ENCODE measurements at regions of chr10 and their contacts with region 1.

Region 1: DNA sequence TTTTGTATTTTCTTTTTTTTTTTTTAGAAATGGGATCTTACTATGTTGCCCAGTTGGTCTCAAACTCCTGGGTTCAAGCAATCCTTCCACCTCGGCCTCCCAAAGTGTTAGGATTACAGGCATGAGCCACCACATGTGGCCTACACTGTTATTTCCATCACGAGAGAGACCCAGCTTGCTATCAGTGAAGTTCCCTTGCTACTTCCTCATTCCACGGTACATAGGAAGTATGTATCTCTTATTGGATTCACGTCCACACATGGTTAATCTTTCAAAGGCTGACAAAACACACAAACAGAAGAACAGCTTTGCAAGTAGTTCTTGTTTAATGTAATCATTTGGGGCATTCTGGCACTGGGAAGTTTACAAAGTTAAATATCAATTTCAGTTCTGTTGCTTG is 50.9 kb downstream of the DCLRE1A start:
- DNase-seq: no peak
- ATAC-seq: no peak
- H3K4me3 Mint-ChIP-seq: no peak overlapping the region
- H3K27ac Mint-ChIP-seq: no peak overlapping the region
- H3K4me1 Mint-ChIP-seq: no peaks in the 10 kb centered on the region
- H3K27me3 Mint-ChIP-seq: peaks cover 33% of the 10 kb centered on the region

Region 2: DNA sequence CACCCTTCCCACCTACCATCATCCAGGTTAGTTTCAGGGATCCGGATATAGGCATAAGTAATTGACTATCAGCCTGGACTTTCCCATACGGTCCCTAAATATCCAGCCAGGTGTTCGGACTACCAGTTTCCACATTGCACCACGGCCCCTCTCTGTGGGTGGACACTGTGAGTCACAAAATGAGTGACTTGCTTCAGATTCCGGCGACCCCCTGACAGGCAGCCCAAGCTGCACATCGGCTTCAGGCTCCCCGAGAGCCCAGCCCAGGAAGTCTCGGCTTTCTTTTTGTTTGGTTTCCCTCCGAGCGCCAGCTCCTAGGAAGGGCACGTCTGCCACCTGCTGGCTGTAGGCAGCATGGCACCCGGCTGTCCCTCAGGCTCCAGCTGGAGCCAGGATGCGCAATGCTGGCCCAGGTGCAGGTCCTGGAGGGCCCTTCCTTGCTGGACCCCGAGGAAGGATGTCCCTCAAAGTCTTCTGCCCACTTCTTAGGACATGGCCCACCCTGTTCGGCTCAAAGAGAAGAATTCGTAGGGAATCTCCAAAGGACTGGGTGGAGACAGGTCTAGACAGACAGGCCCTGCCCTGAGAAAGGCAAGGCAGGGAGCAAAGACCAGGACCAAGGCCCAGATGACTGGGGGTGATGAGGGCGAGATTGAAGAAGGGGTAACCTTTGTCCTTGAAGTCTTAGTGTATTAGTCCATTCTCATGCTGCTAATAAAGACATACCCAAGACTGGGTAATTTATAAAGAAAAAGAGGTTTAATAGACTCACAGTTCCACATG is 239.5 kb before region 1 on chr10:
- CTCF ChIA-PET with region 1: no interaction called
- DNase-seq: peak; percentile 79
- ATAC-seq: peak; percentile 91
- H3K4me3 Mint-ChIP-seq: peak overlapping the region; percentile 43
- H3K27ac Mint-ChIP-seq: no peak overlapping the region
- H3K4me1 Mint-ChIP-seq: peaks cover 4% of the 10 kb centered on the region
- H3K27me3 Mint-ChIP-seq: peaks cover 18% of the 10 kb centered on the region

Region 3: DNA sequence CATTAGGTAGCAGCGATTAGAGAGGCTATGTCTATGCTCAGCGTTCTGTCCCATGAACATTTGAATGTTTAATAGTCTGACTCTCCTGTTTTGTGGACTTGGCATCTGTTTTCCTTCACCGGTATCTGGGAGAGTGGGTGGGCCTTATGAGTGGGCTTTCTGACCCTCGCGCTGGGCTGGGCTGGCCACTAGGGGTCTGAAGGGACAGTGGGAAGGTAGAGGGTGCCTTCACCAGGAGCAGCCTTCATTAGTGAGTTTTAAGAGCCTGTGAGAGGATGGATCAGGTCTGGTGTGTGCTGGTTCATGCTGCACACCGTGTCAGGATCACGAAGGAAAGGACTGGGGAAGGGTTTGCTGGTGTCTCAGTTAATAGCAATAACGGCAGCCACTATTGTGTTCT is 17.5 kb after region 1 on chr10:
- CTCF ChIA-PET with region 1: no interaction called
- DNase-seq: no peak
- ATAC-seq: no peak
- H3K4me3 Mint-ChIP-seq: no peak overlapping the region
- H3K27ac Mint-ChIP-seq: no peak overlapping the region
- H3K4me1 Mint-ChIP-seq: no peaks in the 10 kb centered on the region
- H3K27me3 Mint-ChIP-seq: peaks cover 12% of the 10 kb centered on the region

Region 4: DNA sequence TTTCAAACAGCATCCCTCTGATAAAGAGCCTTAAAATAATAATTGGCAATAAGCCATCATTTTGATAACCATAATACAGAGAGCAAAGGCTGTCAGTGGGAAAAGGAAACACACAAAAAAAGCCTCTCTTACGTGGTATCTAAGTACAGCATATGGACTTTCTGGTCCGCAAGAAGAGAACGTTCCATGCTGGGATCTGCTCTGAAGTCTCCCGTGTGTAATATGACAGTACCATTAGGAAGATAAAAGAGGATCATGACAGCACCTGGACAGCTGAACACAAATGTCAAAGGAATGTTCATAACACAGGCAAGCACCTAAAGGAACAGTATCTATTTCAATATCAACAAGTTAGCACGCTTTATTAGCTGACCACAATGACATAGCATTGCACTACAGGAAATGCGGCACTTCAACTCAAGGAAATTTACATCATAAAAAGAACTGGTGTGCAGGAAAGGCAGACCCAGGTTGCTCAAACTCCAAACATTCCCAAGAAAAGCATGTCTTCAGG is 41.0 kb after region 1 on chr10:
- CTCF ChIA-PET with region 1: no interaction called
- DNase-seq: no peak
- ATAC-seq: no peak
- H3K4me3 Mint-ChIP-seq: no peak overlapping the region
- H3K27ac Mint-ChIP-seq: no peak overlapping the region
- H3K4me1 Mint-ChIP-seq: peaks cover 14% of the 10 kb centered on the region
- H3K27me3 Mint-ChIP-seq: no peaks in the 10 kb centered on the region

Region 5: GRCh38 chr10:114103284-114103683 is 300.3 kb after region 1 on chr10:
- CTCF ChIA-PET with region 1: interaction called, 54 read pairs
- DNase-seq: no peak
- ATAC-seq: peak; percentile 50
- H3K4me3 Mint-ChIP-seq: no peak overlapping the region
- H3K27ac Mint-ChIP-seq: no peak overlapping the region
- H3K4me1 Mint-ChIP-seq: peaks cover 35% of the 10 kb centered on the region
- H3K27me3 Mint-ChIP-seq: peaks cover 38% of the 10 kb centered on the region

Region 6: DNA sequence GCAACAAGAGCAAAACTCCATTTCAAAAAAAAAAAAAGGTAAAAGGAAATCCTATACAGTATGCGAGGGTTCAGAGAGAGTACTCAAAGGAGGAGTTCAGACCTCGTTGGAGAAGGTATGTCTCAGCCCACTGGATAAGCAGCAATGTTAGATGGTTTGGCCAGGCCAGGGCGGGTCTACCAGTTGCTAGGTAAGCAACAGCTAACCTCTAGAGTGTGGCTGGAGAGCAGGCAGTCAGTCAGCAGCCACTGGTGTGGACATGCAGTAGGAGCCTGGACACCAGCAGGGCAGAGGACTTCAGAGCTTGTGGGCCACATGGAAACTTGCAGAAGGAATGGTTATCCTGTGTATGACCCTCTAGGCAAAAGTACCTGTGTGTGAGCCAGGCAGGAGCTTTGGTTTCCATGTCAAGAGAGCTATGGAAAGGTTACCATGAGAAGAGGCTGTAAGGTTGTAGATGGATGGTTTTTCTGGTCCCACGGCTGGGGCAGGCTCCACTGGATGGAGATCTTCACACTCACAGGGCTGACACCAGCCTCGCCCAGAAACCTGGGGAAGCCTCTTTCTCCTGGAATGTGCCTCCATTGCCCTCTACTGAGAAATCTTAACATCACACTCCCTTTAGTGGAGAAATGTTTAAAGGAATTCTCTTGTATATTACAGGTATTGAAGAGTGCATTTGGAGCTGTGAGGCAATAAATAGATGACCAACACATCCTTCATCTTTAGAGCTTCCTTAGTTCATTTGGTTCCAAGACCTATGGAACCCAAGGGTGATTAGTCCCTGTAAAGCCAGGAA is 307.4 kb after region 1 on chr10:
- CTCF ChIA-PET with region 1: interaction called, 15 read pairs
- DNase-seq: no peak
- ATAC-seq: no peak
- H3K4me3 Mint-ChIP-seq: no peak overlapping the region
- H3K27ac Mint-ChIP-seq: no peak overlapping the region
- H3K4me1 Mint-ChIP-seq: no peaks in the 10 kb centered on the region
- H3K27me3 Mint-ChIP-seq: peaks cover 27% of the 10 kb centered on the region

Measured in activated CD8-positive, alpha-beta memory T cell treated with anti-CD3 and anti-CD28 coated beads, Interleukin-2, amount 10 ng/mL, durations not matched to agents 7 days and 5 days (primary cell).